ENCODE measurements at regions of chr9 and their contacts with region 1.

Region 1: GRCh38 chr9:14347406-14348122 is 33.6 kb upstream of the NFIB start:
- DNase-seq: peak; percentile 75
- ATAC-seq: peak; percentile 67

Region 2: DNA sequence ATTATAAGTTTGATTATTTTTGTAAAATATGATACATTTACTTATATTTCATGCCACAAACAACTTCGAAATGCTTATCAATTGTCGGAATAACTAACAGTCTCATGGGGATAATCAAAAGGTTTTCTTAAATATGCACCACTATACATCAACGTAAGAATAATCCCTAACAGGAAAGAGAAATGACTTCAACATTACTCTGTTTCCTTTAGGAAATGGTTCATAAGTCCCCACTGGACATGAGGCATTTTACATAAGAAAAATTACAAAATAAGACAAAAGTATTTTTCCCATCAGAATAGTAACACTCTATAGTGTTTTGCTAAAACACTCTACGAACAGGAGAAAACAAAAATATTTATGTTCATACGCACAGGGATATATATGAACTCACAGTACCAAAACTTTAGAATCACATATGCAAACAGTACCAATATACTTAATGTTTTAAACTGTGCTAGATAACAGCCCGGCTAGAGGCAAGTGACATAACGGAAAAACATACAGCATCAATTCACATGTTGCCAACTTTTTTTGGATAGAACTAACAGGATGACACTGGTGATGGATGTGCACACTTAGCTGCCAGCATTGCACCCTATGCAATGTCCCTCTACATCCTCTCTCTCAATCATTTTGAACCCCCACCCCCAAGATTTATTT is 154.1 kb before region 1 on chr9:
- intact Hi-C with region 1: no loop called
- DNase-seq: no peak
- ATAC-seq: no peak

Region 3: DNA sequence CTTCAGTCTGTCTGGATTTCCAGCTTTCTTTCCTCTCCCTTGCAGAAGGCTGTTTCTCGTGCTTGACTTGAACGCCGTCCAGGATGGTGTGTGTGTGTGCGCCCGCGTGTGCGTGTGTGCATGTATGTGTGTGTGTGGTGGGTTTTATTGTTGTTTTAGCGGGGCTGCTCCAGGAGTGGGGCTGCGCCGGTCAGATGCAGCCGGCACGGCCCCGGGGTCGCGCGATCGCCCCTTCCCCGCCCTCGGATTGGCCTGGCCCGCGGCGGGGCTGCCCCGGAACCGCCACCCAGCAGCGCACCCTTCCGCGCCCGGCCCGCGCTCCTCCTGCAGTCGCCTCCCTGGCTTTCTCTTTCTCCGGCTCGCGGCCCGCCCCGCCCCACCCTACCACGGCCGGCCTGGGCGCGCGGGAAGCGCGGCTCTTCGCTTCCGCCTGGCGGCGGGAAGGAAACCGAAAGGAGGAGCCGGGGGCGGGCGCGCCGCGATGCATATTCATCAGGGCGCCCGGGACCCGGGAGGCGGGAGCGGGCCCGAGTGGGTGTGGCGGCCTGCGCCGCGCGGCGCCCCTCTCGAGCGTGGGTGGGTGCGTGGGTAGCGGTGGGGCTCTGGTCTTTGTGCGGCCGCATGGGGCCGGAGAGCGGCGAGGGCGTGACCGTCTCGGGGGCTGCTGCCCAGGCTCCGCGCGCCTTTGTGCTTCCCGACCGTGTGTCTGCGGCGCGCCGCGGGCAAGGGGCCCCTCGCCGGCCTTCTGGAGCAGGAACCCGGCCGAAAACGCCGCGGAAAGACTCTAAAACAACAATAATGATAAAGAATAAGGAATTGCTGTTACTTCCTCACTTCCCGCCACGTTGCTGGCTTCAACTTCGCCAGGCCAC is 25.1 kb before region 1 on chr9:
- intact Hi-C with region 1: loop called (anchors 1 kb)
- DNase-seq: peak; percentile 94
- ATAC-seq: peak; percentile 95

Measured in Right ventricle myocardium inferior (tissue), 1 donor.